Activated CD4-positive, alpha-beta T cell treated with anti-CD3 and anti-CD28 coated beads for 36 hours (primary cell): ENCODE measurements at regions of chr10 and their contacts with region 1.

Region 1: DNA sequence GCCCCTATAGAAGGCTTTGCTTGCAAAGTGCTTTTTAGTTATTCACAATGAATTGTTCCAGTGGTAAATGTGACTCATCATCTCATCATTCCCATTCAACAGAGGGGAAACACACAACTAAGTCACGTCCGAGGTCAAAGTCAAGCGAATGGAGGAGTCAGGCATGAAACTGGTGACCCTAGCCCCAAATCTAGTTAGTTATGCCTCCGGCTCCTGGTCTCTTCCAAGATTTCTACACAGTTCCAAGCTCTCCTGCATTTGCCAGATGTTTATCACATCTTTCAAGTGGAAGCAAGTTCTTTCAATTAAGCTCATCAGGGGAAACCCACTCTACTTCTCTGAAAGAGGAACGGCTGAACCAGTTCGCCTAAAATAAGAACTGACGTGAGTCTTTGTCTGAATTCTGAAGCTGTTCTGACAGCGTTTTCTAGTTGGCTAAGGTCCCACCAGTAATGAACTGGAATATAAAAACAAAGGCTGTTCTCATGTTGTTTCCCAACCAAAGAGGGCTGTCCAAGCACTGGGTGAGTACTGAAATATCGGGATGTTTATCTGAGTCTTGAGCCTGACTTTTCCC is 140.9 kb upstream of the NRBF2 start:
- DNase-seq: peak; percentile 28
- ATAC-seq: peak; percentile 19
- H3K4me3 Mint-ChIP-seq: peak overlapping the region; percentile 26
- H3K27ac Mint-ChIP-seq: peak overlapping the region; percentile 82
- H3K4me1 Mint-ChIP-seq: peaks cover 63% of the 10 kb centered on the region
- H3K27me3 Mint-ChIP-seq: peaks cover 3% of the 10 kb centered on the region

Region 2: GRCh38 chr10:62437696-62438095 is 554.5 kb before region 1 on chr10:
- CTCF ChIA-PET with region 1: no interaction called
- POLR2A ChIA-PET with region 1: no interaction called
- intact Hi-C with region 1: loop called in 1 of 2 experiments (anchors 1 kb)
- DNase-seq: no peak
- ATAC-seq: no peak
- H3K4me3 Mint-ChIP-seq: no peak overlapping the region
- H3K27ac Mint-ChIP-seq: no peak overlapping the region
- H3K4me1 Mint-ChIP-seq: peaks cover 19% of the 10 kb centered on the region
- H3K27me3 Mint-ChIP-seq: peaks cover 20% of the 10 kb centered on the region

Region 3: GRCh38 chr10:62610649-62611229 is 381.5 kb before region 1 on chr10:
- CTCF ChIA-PET with region 1: interaction called, 3 read pairs
- POLR2A ChIA-PET with region 1: no interaction called
- intact Hi-C with region 1: loop called in 1 of 2 experiments (anchors 5 kb)
- DNase-seq: peak; percentile 87
- ATAC-seq: peak; percentile 79
- H3K4me3 Mint-ChIP-seq: no peak overlapping the region
- H3K27ac Mint-ChIP-seq: no peak overlapping the region
- H3K4me1 Mint-ChIP-seq: peaks cover 27% of the 10 kb centered on the region
- H3K27me3 Mint-ChIP-seq: peaks cover 14% of the 10 kb centered on the region

Region 4: GRCh38 chr10:62681211-62681940 is 310.9 kb before region 1 on chr10:
- CTCF ChIA-PET with region 1: no interaction called
- POLR2A ChIA-PET with region 1: no interaction called
- intact Hi-C with region 1: loop called (anchors 2 to 5 kb)
- DNase-seq: peak; percentile 94
- ATAC-seq: peak; percentile 94
- H3K4me3 Mint-ChIP-seq: peak overlapping the region; percentile 11
- H3K27ac Mint-ChIP-seq: peak overlapping the region; percentile 86
- H3K4me1 Mint-ChIP-seq: peaks cover 34% of the 10 kb centered on the region
- H3K27me3 Mint-ChIP-seq: peaks cover 7% of the 10 kb centered on the region

Region 5: DNA sequence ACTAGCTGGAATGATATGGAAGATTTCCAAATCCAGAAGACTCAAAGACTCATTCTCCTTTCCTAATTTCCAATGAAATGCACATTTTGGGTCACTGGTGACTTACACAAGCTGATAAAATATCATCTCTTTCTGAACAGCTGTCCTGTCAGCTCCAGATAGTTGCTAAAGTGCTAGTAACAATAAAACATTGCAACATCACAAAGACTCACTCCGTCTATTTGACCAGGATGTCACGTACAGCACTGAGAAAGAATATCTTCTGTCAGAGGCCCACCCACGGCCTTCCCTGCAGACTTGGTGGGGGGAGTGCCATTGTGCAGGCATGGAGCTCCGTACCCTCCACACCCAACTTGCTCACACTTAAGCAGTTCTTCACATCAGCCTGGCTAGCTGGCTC is 97.2 kb before region 1 on chr10:
- CTCF ChIA-PET with region 1: no interaction called
- POLR2A ChIA-PET with region 1: no interaction called
- intact Hi-C with region 1: no loop called
- DNase-seq: no peak
- ATAC-seq: no peak
- H3K4me3 Mint-ChIP-seq: no peak overlapping the region
- H3K27ac Mint-ChIP-seq: no peak overlapping the region
- H3K4me1 Mint-ChIP-seq: no peaks in the 10 kb centered on the region
- H3K27me3 Mint-ChIP-seq: peaks cover 25% of the 10 kb centered on the region

Region 6: DNA sequence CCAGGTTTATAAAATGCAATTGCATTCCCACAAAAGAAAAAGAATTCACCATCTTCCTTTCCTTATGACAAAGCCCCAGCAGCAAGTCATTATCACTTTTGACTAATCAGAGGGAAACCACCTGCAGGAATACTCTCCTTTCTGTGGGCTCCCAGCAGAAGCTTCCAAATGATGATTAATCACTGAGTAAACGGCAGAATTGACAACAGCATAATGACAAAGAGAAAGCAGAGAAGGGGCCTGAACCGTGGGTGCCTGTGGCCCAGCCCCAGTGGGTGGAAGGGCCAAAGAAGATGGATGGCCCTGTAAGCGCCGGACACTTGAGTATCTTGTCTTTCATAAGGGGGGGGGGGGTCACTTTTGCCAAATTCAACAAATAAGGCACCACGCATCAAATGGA is 11.5 kb before region 1 on chr10:
- CTCF ChIA-PET with region 1: interaction called, 11 read pairs
- POLR2A ChIA-PET with region 1: interaction called, 3 read pairs
- intact Hi-C with region 1: loop called (anchors 1 kb)
- DNase-seq: peak; percentile 60
- ATAC-seq: peak; percentile 91
- H3K4me3 Mint-ChIP-seq: no peak overlapping the region
- H3K27ac Mint-ChIP-seq: peak overlapping the region; percentile 75
- H3K4me1 Mint-ChIP-seq: peaks cover 41% of the 10 kb centered on the region
- H3K27me3 Mint-ChIP-seq: peaks cover 19% of the 10 kb centered on the region

Region 7: DNA sequence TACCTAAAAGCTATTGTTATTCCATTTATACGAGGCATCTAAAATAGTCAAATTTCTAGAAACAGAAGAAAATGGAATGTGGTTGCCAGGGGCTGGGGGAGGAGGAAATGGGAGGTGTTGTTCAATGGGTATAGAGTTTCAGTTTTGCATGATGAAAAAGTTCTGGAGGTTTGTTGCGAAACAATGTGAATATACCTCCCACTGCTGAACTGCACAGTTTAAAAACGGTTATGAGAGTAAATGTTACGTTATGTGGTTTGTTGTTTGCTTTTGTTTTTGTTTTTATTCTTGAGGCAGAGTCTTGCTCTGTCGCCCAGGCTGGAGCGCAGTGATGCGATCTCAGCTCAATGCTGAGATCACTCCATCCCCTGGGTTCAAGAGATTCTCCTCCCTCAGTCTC is 76.0 kb after region 1 on chr10:
- CTCF ChIA-PET with region 1: interaction called, 4 read pairs
- POLR2A ChIA-PET with region 1: no interaction called
- intact Hi-C with region 1: loop called in 1 of 2 experiments (anchors 5 kb)
- DNase-seq: peak; percentile 36
- ATAC-seq: peak; percentile 87
- H3K4me3 Mint-ChIP-seq: no peak overlapping the region
- H3K27ac Mint-ChIP-seq: no peak overlapping the region
- H3K4me1 Mint-ChIP-seq: peaks cover 22% of the 10 kb centered on the region
- H3K27me3 Mint-ChIP-seq: peaks cover 50% of the 10 kb centered on the region

Region 8: DNA sequence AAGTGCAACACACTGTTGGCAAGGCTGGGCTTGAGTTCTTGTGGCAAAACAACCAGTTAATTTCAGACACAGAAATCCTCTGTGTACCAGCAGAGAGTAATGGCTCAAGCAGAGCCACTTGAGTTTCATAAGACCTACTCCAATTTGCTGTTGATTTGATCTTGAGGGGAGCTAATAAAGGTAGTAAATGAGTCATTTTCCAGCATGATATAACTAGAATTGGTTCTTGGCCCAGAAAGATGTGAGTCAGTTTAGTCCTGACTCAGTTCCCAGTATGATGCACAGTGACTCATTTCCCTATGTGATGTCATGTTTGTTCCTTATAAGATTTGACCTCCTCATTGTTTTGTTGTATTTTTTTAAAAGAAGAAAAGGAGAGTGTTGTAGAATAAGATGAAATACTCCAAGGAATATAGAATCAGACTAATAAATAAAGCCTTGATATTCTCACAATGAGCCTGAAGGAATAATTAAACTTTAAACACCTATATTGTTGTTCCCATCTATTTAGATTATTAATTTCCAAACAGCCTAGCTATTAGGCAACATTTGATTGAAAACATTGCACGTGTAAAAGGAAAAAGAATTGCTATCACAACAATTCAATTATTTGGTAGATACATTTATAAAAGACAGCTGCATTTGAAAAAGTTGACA is 715.1 kb after region 1 on chr10:
- CTCF ChIA-PET with region 1: no interaction called
- POLR2A ChIA-PET with region 1: no interaction called
- intact Hi-C with region 1: loop called in 1 of 2 experiments (anchors 1 kb)
- DNase-seq: peak; percentile 39
- ATAC-seq: peak; percentile 94
- H3K4me3 Mint-ChIP-seq: no peak overlapping the region
- H3K27ac Mint-ChIP-seq: no peak overlapping the region
- H3K4me1 Mint-ChIP-seq: peaks cover 19% of the 10 kb centered on the region
- H3K27me3 Mint-ChIP-seq: no peaks in the 10 kb centered on the region